Motor neuron (in vitro differentiated cells): ENCODE measurements at regions of chr12 and their contacts with region 1.

Region 1: GRCh38 chr12:85424581-85425348 is 144.7 kb downstream of the ALX1 start:
- ATAC-seq: peak in 3 of 8 experiments; percentile 53 to 54 (median 54)
- H3K4me3 ChIP-seq: no peak overlapping the region
- H3K27ac ChIP-seq: no peak overlapping the region
- H3K4me1 ChIP-seq: no peaks in the 10 kb centered on the region

Region 2: GRCh38 chr12:85076688-85077430 is 347.9 kb before region 1 on chr12:
- in situ Hi-C with region 1: loop called in 1 of 9 experiments (anchors 25 kb)
- ATAC-seq: peak; percentile 57 to 86 (median 71)
- H3K4me3 ChIP-seq: no peak overlapping the region
- H3K27ac ChIP-seq: no peak overlapping the region
- H3K4me1 ChIP-seq: no peaks in the 10 kb centered on the region

Region 3: DNA sequence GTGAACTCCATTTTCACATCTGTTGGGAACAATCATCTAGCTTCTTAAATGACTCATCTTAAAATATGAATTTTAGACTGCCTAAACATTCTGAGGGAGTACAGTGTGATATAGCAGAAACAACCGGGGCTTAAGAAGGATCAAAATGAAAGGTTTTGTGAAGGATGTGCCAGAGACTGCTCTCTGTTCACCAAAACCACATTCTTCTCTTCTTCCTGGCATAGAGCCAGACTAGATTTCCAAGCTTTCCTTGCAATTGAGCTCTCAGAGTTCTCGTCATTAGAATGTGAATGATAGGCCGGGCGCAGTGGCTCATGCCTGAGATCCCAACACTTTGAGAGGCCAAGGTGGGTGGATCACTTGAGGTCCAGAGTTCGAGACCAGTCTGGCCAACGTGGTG is 294.1 kb before region 1 on chr12:
- in situ Hi-C with region 1: loop called in 1 of 9 experiments (anchors 25 kb)
- ATAC-seq: no peak
- H3K4me3 ChIP-seq: no peak overlapping the region
- H3K27ac ChIP-seq: no peak overlapping the region
- H3K4me1 ChIP-seq: no peaks in the 10 kb centered on the region

Region 4: GRCh38 chr12:85310456-85311076 is 114.2 kb before region 1 on chr12:
- in situ Hi-C with region 1: loop called in 1 of 9 experiments (anchors 25 kb)
- ATAC-seq: no peak
- H3K4me3 ChIP-seq: no peak overlapping the region
- H3K27ac ChIP-seq: no peak overlapping the region
- H3K4me1 ChIP-seq: peaks cover 17 to 23% of the 10 kb centered on the region in 2 donors